Activated CD4-positive, alpha-beta T cell treated with anti-CD3 and anti-CD28 coated beads, Interleukin-2, amount 10 ng/mL, durations not matched to agents 24 days and 14 days (primary cell): ENCODE measurements at regions of chr2 and their contacts with region 1.

Region 1: DNA sequence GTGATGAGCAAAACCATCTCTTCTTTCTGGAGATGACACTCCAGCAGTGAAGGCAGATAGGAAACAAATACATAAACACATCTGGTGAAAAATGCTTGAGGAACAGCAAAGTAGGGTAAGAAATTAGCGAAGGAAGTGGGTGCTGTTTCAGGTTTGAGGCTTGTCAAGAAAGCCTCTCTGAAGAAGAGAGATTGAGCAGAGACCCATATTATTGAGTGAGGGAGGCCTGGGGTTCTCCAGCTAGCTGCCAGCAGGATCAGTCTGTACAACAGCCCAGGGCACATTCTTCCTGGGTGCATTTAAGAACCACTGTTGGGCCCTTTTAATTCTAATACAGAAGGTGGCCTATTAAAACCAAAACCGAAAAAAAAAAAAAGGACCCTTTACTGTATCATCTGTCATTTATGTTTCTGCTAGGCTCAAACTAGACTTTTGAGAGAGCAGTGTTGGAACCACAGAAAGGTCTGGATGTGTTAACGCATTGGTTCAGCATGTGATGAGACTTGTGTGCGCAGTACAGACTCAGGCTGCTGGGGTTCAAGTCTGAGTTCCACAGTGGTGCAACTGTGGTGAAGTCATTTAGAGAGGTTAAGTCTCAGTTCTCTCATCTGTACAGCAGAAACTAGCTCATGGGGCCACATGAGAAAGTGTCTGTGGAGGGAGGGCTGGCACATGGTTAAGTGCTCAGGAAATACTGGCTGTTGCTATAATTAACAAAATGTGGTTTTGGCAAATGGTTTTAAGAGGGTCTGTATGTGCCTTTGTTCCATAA is 28.9 kb downstream of the MGAT5 start:
- DNase-seq: peak; percentile 79
- H3K4me3 Mint-ChIP-seq: peak overlapping the region; percentile 58
- H3K27ac Mint-ChIP-seq: peak overlapping the region; percentile 86
- H3K4me1 Mint-ChIP-seq: peaks cover 44% of the 10 kb centered on the region
- H3K27me3 Mint-ChIP-seq: no peaks in the 10 kb centered on the region

Region 2: GRCh38 chr2:134250840-134251461 is 31.9 kb before region 1 on chr2:
- intact Hi-C with region 1: loop called (anchors 1 kb)
- DNase-seq: no peak
- H3K4me3 Mint-ChIP-seq: no peak overlapping the region
- H3K27ac Mint-ChIP-seq: peak overlapping the region; percentile 8
- H3K4me1 Mint-ChIP-seq: peaks cover 72% of the 10 kb centered on the region
- H3K27me3 Mint-ChIP-seq: peaks cover 10% of the 10 kb centered on the region

Region 3: DNA sequence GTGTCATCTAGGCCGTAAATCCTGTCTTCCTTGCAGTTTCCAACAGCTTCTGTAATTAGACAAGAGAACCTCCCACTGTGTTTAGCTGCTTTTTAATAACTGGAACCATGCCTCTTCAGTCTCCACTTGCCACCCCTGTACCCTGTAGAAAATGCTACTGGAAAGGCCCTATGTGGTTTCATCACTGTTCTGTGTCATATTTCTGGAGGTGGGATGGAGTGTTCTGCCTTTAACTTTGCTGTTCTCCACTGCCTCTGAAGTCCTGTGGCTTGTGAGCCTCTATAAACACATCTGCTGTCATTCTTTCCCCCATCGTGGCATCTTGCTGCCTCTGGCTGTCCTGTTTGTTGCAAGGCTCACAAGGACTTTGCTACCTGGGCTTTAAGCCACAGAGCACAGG is 11.1 kb before region 1 on chr2:
- intact Hi-C with region 1: loop called (anchors 1 kb)
- DNase-seq: no peak
- H3K4me3 Mint-ChIP-seq: no peak overlapping the region
- H3K27ac Mint-ChIP-seq: no peak overlapping the region
- H3K4me1 Mint-ChIP-seq: peaks cover 29% of the 10 kb centered on the region
- H3K27me3 Mint-ChIP-seq: no peaks in the 10 kb centered on the region

Region 4: DNA sequence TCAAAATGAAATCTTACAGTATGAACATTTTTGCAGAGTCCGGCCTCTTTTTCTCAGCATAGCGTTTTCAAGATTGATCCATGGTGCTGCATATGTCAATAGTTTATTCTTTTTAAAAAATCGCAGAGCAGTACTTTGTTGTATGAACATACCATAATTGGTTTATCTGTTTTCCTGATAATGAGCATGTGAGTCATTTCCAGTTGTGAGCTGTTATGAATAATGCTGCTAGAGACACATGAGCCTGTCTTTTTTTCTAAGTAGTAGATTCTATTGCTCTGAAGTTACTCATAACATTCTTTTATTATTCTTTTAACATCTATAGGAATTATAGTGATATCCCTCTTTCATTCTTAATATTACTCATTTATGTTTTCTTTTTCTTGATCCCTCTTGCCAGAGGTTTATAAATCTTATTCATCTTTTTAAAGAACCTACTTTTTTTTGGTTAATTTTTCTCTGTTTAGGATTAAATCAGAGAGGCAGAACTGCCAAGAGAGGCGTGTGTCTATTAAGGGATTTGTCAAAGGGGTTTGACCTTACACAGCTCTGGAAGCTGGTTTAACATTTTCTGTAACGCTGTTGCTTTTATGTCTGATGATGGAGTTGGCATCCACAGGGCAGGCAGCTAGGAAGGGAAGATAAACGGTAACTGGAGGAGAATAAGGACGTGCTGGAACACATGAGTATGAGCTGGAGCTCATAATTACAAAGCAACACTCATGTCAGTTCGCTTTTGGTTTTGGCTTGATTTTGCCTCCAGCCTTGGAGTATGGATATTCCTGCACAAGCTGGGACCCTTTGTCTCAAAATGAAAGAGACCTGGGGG is 18.5 kb after region 1 on chr2:
- intact Hi-C with region 1: loop called (anchors 1 kb)
- DNase-seq: no peak
- H3K4me3 Mint-ChIP-seq: no peak overlapping the region
- H3K27ac Mint-ChIP-seq: peak overlapping the region; percentile 8
- H3K4me1 Mint-ChIP-seq: peaks cover 25% of the 10 kb centered on the region
- H3K27me3 Mint-ChIP-seq: no peaks in the 10 kb centered on the region

Region 5: DNA sequence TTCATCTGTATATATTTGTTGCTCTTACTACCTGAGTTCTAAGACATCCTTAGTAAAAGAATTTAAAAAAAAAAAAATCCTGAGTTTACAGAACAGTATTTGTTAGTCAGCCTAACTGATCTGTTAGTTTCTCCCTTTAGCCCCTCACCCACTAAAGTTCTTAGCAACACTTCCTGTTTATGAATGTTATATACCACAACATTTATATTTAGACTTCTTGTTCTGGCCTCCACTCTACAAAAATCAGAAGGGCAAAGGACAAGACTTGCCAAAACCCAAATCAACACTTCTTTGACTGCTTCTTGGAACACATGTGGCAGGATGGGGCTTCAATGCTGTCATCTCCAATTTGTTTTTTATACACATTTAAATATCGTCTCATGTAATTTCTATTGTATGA is 42.1 kb after region 1 on chr2:
- intact Hi-C with region 1: loop called (anchors 5 kb)
- DNase-seq: peak; percentile 76
- H3K4me3 Mint-ChIP-seq: peak overlapping the region; percentile 12
- H3K27ac Mint-ChIP-seq: no peak overlapping the region
- H3K4me1 Mint-ChIP-seq: peaks cover 56% of the 10 kb centered on the region
- H3K27me3 Mint-ChIP-seq: no peaks in the 10 kb centered on the region

Region 6: GRCh38 chr2:134918526-134919340 is 635.9 kb after region 1 on chr2 and contains the start of gene CCNT2:
- intact Hi-C with region 1: loop called (anchors 10 kb)
- DNase-seq: peak; percentile 100
- H3K4me3 Mint-ChIP-seq: peak within 1 kb of the TSS; percentile 96
- H3K27ac Mint-ChIP-seq: peak within 1 kb of the TSS; percentile 97
- H3K4me1 Mint-ChIP-seq: peaks cover 23% of the 10 kb centered on the region
- H3K27me3 Mint-ChIP-seq: peaks cover 6% of the 10 kb centered on the region
- total RNA-seq, gene CCNT2: 46.0 and 48.5 TPM in 2 replicates